Ascending aorta (tissue), 2 donors: ENCODE measurements at regions of chr2 and their contacts with region 1.

Region 1: GRCh38 chr2:218406209-218406948 is 6.7 kb downstream of the CTDSP1 start:
- DNase-seq: peak; percentile 85 to 97
- H3K4me3 ChIP-seq: peak overlapping the region; percentile 56 to 65
- H3K27ac ChIP-seq: peak overlapping the region; percentile 88 to 94
- H3K4me1 ChIP-seq: peaks cover 8 to 42% of the 10 kb centered on the region in 2 donors
- H3K27me3 ChIP-seq: no peaks in the 10 kb centered on the region
- CTCF ChIP-seq: peak; percentile 84 to 87 (median 87)

Region 2: GRCh38 chr2:218216674-218217359 is 189.6 kb before region 1 on chr2 and contains the start of gene ARPC2:
- intact Hi-C with region 1: loop called (anchors 2 kb)
- DNase-seq: peak; percentile 75 to 97
- H3K4me3 ChIP-seq: peak within 1 kb of the TSS; percentile 96
- H3K27ac ChIP-seq: peak within 1 kb of the TSS; percentile 97 to 98
- H3K4me1 ChIP-seq: peaks cover 19 to 35% of the 10 kb centered on the region in 2 donors
- H3K27me3 ChIP-seq: no peaks in the 10 kb centered on the region
- CTCF ChIP-seq: peak in 1 of 3 experiments; percentile 22
- total RNA-seq, gene ARPC2: 237 TPM

Region 3: DNA sequence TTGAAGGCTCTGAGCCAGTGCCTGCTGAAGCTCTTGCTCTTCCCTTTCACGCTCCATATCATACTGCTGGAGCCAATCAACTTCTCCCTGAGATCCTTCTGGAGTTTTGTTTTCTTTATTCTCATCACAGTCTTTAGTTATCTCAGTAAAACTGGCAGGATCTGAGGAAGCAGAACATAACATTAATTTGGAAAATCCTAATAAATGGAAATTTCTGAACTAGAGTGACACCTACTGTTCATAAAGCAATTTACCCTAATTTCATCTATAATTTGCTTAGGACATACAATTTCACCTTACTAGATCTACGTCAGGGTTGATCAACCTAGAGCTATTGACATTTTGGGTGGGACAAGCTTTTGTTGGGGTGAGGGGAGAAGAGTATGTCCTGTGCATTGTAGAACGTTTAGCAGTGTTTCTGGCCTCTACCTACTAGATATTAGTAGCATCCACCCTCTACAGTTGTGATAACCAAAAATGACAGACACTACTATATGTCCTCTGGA is 59.7 kb after region 1 on chr2:
- intact Hi-C with region 1: loop called (anchors 2 kb)
- DNase-seq: no peak
- H3K4me3 ChIP-seq: no peak overlapping the region
- H3K27ac ChIP-seq: no peak overlapping the region
- H3K4me1 ChIP-seq: no peaks in the 10 kb centered on the region
- H3K27me3 ChIP-seq: no peaks in the 10 kb centered on the region
- CTCF ChIP-seq: peak; percentile 29 to 59 (median 38)

Region 4: GRCh38 chr2:218568190-218569037 is 162.0 kb after region 1 on chr2 and contains the starts of genes CNOT9 and USP37:
- intact Hi-C with region 1: loop called (anchors 1 kb)
- DNase-seq: peak; percentile 96 to 100
- H3K4me3 ChIP-seq: peak within 1 kb of the TSS; percentile 75 to 89
- H3K27ac ChIP-seq: peak within 1 kb of the TSS; percentile 91 to 95
- H3K4me1 ChIP-seq: peaks cover 5 to 26% of the 10 kb centered on the region in 2 donors
- H3K27me3 ChIP-seq: no peaks in the 10 kb centered on the region
- CTCF ChIP-seq: no peak
- total RNA-seq, gene CNOT9: 46.7 TPM
- total RNA-seq, gene USP37: 11.8 TPM